ENCODE measurements at regions of chr6 and their contacts with region 1.

Region 1: DNA sequence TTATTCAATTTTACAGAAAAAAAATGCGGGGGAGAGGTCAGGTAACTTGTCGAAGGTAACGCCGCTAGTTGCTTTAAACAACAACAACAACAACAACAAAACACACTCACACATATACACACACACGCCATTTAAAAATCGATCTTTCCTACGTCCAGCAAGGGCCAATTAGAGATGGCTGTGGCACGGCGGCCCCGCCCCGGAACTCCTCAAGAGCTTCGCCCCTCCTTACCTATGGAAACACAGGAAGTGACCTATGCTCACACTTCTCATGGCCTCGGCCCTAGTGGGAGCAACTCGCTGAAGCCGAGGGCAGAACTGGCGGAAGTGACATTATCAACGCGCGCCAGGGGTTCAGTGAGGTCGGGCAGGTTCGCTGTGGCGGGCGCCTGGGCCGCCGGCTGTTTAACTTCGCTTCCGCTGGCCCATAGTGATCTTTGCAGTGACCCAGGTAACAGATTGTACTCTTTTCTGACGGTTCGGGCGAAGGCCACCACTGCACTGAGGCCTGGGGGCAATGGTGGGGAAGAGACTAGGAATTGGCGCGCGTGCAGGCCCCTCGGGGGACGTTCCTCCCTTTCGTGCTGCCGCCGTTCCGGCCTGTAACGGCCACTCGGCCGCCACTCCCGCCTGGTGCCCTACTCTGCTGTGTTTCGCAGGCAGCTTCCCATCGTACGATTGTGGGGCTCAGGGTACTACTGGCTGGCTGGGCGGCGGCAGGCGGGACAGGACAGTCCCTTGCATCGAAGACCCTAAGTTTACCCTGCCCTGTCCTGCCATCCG is at the start of gene TBP:
- DNase-seq: peak; percentile 92 to 100 (median 95)
- ATAC-seq: peak; percentile 93
- H3K4me3 ChIP-seq: peak within 1 kb of the TSS; percentile 69
- H3K27ac ChIP-seq: peak within 1 kb of the TSS; percentile 90
- H3K4me1 ChIP-seq: peaks cover 3 to 24% of the 10 kb centered on the region in 2 experiments; a peak in 4 of 5 replicates
- H3K27me3 ChIP-seq: no peaks in the 10 kb centered on the region
- CTCF ChIP-seq: peak in 1 of 3 experiments; percentile 5; a peak in 1 of 6 replicates
- EP300 ChIP-seq: peak; percentile 63; the same call in 1 of the 2 replicates
- POLR2A ChIP-seq: peak; percentile 91
- RAD21 ChIP-seq: 0 out of 4 replicates have a peak, but pooled peaks of 1 of the 2 experiments have one; percentile 4
- polyA plus RNA-seq, gene TBP: 61.3 to 86.1 TPM

Region 2: DNA sequence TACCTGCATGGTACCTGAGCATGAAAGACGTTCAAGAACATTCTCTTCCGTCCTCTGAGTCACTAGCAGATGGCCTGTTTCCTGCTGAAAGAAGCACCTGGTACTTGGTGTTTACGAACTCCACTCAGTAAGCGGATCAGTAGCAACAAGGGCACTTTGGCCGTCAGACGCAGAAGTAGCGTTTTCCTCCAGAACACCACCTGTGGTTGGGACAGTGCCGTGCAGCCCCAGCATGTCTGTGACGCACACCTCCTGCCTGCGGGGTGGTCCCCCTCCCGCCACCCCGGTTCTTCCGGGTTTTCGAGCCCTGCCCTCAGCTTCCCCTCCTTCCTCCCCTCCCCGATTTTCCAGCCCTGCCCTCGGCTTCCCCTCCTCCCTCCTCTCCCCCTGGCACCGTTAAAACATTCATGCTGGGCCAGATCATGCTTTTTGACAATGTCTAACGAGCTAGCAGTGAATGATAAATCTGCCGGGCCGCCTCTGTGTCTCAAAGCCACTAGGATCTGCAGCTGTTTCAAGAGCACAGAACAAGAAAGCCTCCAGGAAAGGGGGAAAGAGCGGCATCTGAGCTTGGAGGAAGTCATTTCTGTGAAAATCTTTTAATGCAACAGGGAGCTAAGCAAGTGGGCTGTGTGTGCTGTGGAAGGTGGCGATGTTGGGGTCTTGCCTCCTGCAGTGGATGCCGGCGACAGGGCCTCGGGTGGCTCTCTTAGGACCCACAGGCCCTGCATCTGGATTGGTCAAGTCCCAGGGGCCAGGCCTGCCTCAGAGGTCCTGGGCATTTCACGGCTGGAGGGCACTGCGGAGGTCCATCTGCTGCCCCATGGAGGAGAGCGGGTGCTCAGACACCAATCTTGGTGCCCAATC is 594.8 kb before region 1 on chr6:
- CTCF ChIA-PET with region 1: no interaction called
- POLR2A ChIA-PET with region 1: no interaction called
- in situ Hi-C with region 1: no loop called
- intact Hi-C with region 1: no loop called
- DNase-seq: peak in 1 of 4 experiments; percentile 14
- ATAC-seq: peak; percentile 72
- H3K4me3 ChIP-seq: no peak overlapping the region
- H3K27ac ChIP-seq: no peak overlapping the region
- H3K4me1 ChIP-seq: peaks cover 0 to 19% of the 10 kb centered on the region in 2 experiments; a peak in 2 of 5 replicates
- H3K27me3 ChIP-seq: peaks cover 24 to 76% of the 10 kb centered on the region in 2 experiments; a peak in 4 of 5 replicates
- CTCF ChIP-seq: no peak
- EP300 ChIP-seq: no peak
- POLR2A ChIP-seq: no peak
- RAD21 ChIP-seq: no peak

Region 3: GRCh38 chr6:170291271-170292110 is 262.7 kb before region 1 on chr6:
- CTCF ChIA-PET with region 1: no interaction called
- POLR2A ChIA-PET with region 1: no interaction called
- in situ Hi-C with region 1: no loop called
- intact Hi-C with region 1: no loop called
- DNase-seq: no peak
- ATAC-seq: peak; percentile 13; the same call in 1 of the 3 replicates
- H3K4me3 ChIP-seq: no peak overlapping the region
- H3K27ac ChIP-seq: no peak overlapping the region
- H3K4me1 ChIP-seq: peaks cover 0 to 53% of the 10 kb centered on the region in 2 experiments; a peak in 4 of 5 replicates
- H3K27me3 ChIP-seq: peaks cover 70 to 93% of the 10 kb centered on the region in 2 experiments
- CTCF ChIP-seq: no peak
- EP300 ChIP-seq: no peak
- POLR2A ChIP-seq: no peak
- RAD21 ChIP-seq: no peak

Region 4: GRCh38 chr6:170542031-170542719 is 12.0 kb before region 1 on chr6:
- CTCF ChIA-PET with region 1: no interaction called
- POLR2A ChIA-PET with region 1: interaction called, 19 read pairs
- in situ Hi-C with region 1: no loop called
- intact Hi-C with region 1: no loop called
- DNase-seq: peak in 1 of 4 experiments; percentile 9
- ATAC-seq: no peak; the same call in 2 of the 3 replicates
- H3K4me3 ChIP-seq: no peak overlapping the region
- H3K27ac ChIP-seq: no peak overlapping the region
- H3K4me1 ChIP-seq: no peaks in the 10 kb centered on the region
- H3K27me3 ChIP-seq: no peaks in the 10 kb centered on the region
- CTCF ChIP-seq: no peak
- EP300 ChIP-seq: no peak
- POLR2A ChIP-seq: peak; percentile 41; the same call in 1 of the 2 replicates
- RAD21 ChIP-seq: no peak

Region 5: GRCh38 chr6:170584181-170584953 is 30.2 kb after region 1 on chr6 and contains the start of gene PDCD2:
- CTCF ChIA-PET with region 1: no interaction called
- POLR2A ChIA-PET with region 1: interaction called, 11 read pairs
- in situ Hi-C with region 1: no loop called
- intact Hi-C with region 1: loop called (anchors 2 kb)
- DNase-seq: peak; percentile 93 to 98 (median 95)
- ATAC-seq: peak; percentile 95
- H3K4me3 ChIP-seq: peak within 1 kb of the TSS; percentile 96
- H3K27ac ChIP-seq: peak within 1 kb of the TSS; percentile 89
- H3K4me1 ChIP-seq: peaks cover 10 to 15% of the 10 kb centered on the region in 2 experiments; a peak in 4 of 5 replicates
- H3K27me3 ChIP-seq: no peaks in the 10 kb centered on the region
- CTCF ChIP-seq: 0 out of 6 replicates have a peak, but pooled peaks of 1 of the 3 experiments have one; percentile 7
- EP300 ChIP-seq: peak; percentile 46; the same call in 1 of the 2 replicates
- POLR2A ChIP-seq: peak; percentile 88
- RAD21 ChIP-seq: no peak
- polyA plus RNA-seq, gene PDCD2: 67.3 to 105 TPM

Measured in K562 (cell line).